AG04450 (cell line): ENCODE measurements at regions of chr3 and their contacts with region 1.

Region 1: DNA sequence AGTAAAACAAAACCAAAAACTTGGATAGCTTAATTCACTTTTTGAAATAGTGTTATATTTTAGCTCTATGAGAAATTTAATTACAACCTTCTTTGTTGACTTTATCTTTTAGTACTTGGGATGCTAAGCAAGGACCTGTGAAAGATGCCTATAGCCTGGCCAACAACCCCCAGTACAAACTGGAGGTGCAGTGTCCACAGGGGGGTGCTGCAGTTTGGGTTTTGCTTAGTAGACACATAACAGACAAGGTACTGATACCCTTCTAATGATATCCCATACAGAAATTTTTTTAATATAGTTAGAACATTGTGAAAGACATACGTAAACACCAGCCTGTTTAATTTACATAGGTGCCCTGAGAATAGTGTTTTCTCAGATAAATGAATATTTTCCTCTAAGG is 35.3 kb downstream of the CAPN7 start:
- DNase-seq: no peak
- H3K4me3 ChIP-seq: no peak overlapping the region
- H3K27ac ChIP-seq: no peak overlapping the region
- H3K27me3 ChIP-seq: no peaks in the 10 kb centered on the region
- CTCF ChIP-seq: 0 out of 2 replicates have a peak, but pooled peaks have one; percentile 26

Region 2: DNA sequence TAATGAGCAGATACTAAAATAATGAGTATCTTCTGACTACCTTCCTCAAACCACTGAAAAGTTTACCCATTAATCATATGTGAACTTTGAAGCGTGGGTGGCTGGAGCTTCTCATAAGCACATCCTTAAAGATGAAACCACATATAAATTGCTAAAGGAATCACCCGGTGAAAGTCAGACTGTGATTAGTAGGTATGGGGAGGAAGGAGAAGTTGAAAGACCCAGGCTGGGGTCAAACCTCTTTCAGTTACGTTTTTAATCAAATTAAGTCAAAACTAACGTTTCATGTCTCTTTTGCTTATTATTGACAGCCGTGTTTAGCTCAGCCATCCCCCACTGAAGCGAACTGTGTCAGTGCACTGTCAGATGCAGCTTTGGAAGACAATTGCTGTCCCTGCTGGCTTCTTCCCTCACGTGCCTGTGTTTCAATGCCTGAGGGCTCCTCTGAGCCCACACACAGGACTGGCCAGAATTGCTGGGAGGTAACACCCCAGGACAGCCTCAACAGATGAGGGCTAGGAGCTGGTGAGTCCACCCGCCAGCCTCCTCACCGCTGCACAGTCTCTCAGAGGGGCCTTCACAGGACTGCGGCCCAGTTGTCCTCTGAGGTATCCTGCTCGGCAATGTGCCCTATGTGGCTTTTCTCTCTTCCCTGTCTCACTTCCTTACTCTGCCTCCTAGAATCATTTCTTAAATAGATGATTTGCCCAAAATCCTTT is 120.3 kb after region 1 on chr3:
- CTCF ChIA-PET with region 1: no interaction called
- POLR2A ChIA-PET with region 1: interaction called, 12 read pairs
- DNase-seq: no peak
- H3K4me3 ChIP-seq: no peak overlapping the region
- H3K27ac ChIP-seq: no peak overlapping the region
- H3K27me3 ChIP-seq: peaks cover under 1% of the 10 kb centered on the region
- CTCF ChIP-seq: no peak